ENCODE measurements at regions of chr5 and their contacts with region 1.

Region 1: GRCh38 chr5:136769900-136770684 is 404.7 kb upstream of the TRPC7 start:
- DNase-seq: peak; percentile 89
- H3K4me3 Mint-ChIP-seq: no peak overlapping the region
- H3K27ac Mint-ChIP-seq: no peak overlapping the region
- H3K4me1 Mint-ChIP-seq: peaks cover 5% of the 10 kb centered on the region
- H3K27me3 Mint-ChIP-seq: peaks cover 49% of the 10 kb centered on the region
- CTCF ChIP-seq: peak; percentile 96

Region 2: DNA sequence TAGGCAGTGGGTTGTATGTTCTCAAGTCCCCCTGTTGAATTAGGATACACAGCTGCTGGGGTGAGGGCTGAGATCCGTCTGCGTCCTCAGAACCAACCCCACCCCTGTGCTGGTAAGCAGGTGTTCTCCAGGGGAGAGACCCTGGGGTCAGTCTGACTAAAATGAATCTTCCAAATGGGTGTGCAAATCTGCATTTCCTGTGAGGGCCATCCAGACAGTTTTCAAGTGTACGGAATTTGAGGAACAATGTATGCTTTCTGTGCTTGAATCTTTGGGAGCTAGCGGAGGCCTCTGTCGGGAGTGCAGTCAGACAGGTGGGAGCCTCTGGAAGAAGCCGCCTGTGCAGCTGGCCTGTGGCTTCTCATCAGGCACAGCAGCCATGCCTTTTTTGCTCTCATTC is 1493.9 kb before region 1 on chr5:
- CTCF ChIA-PET with region 1: no interaction called
- POLR2A ChIA-PET with region 1: no interaction called
- intact Hi-C with region 1: no loop called
- DNase-seq: no peak
- H3K4me3 Mint-ChIP-seq: no peak overlapping the region
- H3K27ac Mint-ChIP-seq: no peak overlapping the region
- H3K4me1 Mint-ChIP-seq: no peaks in the 10 kb centered on the region
- H3K27me3 Mint-ChIP-seq: no peaks in the 10 kb centered on the region
- CTCF ChIP-seq: no peak

Region 3: DNA sequence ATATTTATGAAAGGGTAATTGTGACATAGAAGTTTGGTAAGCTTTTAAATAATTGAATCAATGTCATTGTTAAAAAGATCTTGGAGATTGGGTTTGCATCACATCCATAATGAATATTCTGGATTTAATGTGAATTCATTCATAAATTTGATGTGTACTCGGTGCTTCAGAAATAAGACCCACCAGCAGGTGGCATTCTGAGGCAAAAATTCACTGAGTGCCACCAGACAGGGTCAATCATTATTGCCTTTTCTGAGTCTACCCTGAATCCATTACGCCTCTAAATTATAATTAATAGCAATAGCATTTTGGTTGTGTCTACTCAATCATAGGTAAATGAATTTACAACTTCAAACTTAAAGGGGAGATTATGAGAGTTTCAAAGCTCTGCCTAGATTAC is 405.8 kb before region 1 on chr5:
- CTCF ChIA-PET with region 1: interaction called, 95 read pairs
- POLR2A ChIA-PET with region 1: no interaction called
- intact Hi-C with region 1: loop called (anchors 1 kb)
- DNase-seq: peak; percentile 27
- H3K4me3 Mint-ChIP-seq: no peak overlapping the region
- H3K27ac Mint-ChIP-seq: no peak overlapping the region
- H3K4me1 Mint-ChIP-seq: no peaks in the 10 kb centered on the region
- H3K27me3 Mint-ChIP-seq: peaks cover 31% of the 10 kb centered on the region
- CTCF ChIP-seq: peak; percentile 51

Region 4: DNA sequence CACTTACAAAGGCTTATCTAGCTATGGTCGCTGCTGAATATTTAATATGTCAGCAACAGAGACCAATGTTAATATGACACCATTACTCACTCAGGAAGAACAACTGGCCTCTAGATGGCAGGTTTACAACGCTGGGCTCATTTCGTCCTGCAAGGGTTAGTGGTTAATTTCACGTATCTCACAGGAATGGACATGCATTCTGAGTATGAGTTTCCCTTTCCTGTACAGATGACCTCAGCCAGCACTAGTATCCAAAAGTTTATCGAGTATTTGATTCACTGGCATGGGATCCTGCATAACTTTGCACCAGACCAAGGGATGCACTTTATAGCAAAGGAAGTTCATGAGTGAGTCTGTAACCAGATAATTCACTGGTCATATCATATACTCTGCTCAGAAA is 396.1 kb before region 1 on chr5:
- CTCF ChIA-PET with region 1: interaction called, 4 read pairs
- POLR2A ChIA-PET with region 1: no interaction called
- intact Hi-C with region 1: loop called (anchors 1 kb)
- DNase-seq: peak; percentile 62
- H3K4me3 Mint-ChIP-seq: no peak overlapping the region
- H3K27ac Mint-ChIP-seq: no peak overlapping the region
- H3K4me1 Mint-ChIP-seq: no peaks in the 10 kb centered on the region
- H3K27me3 Mint-ChIP-seq: peaks cover 50% of the 10 kb centered on the region
- CTCF ChIP-seq: peak; percentile 23

Region 5: DNA sequence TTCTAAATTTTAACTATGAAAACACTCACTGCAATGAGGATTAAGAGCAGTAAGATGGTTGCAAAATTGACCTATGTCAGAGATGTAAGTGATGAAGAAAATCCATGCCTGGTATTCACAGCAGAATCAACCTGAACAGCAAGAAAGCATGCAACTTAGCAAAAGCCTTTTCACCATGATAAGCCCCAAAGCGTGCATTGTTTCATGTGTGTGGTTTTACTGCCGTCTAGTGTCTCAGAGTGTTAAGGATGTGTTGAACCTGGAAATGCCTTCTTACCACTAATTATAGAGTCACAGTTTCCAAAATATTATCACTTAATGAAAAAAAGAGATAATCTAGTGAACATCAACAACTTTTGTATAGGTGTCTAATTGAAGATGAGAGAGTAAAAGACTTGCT is 10.4 kb after region 1 on chr5:
- CTCF ChIA-PET with region 1: interaction called, 18 read pairs
- POLR2A ChIA-PET with region 1: no interaction called
- intact Hi-C with region 1: no loop called
- DNase-seq: peak; percentile 21
- H3K4me3 Mint-ChIP-seq: no peak overlapping the region
- H3K27ac Mint-ChIP-seq: no peak overlapping the region
- H3K4me1 Mint-ChIP-seq: no peaks in the 10 kb centered on the region
- H3K27me3 Mint-ChIP-seq: peaks cover 51% of the 10 kb centered on the region
- CTCF ChIP-seq: no peak

Measured in MCF 10A (cell line).